ENCODE measurements at regions of chr5 and their contacts with region 1.

Region 1: GRCh38 chr5:150846654-150847333 is 473 bp downstream of the IRGM start:
- DNase-seq: peak in 2 of 10 donors; percentile 14 to 19

Region 2: DNA sequence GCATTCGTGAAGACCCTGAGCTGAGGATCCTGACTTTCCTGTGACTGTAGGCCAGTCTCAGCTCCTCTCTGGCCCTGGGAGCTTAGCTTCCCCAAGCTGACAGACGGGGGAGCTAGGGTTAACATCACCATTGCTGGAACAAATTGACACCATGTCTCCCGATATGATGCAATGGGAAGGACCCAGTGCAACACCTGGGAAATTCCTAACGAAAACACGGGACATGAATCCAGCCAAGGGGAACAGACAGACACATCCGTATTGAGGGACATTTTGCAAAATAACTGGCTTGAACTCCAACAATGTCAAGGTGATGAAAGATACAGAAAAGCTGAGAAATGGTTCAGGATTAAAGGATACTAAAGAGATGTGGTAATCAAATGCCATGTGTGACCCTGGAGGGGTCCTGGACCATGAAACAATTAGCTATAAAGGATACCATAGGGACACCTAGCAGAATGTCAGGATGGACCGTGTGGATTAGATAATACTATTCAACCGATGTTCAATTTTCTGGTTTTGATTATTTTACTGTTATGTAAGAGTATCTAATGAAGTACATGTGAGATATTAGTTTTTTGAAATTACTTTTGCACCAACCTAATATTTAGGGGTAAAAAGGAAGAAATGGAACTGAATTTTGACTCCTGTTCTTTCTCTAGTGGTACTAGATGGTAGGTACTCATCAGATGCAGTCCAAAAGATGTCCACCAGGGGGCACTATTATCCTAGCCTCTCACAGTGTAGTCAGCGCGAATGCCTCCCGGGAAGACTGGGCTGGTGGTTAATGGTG is 286.2 kb before region 1 on chr5:
- intact Hi-C with region 1: loop called (anchors 2 kb)
- DNase-seq: peak in 8 of 10 donors; percentile 59 to 94 (median 88)

Region 3: DNA sequence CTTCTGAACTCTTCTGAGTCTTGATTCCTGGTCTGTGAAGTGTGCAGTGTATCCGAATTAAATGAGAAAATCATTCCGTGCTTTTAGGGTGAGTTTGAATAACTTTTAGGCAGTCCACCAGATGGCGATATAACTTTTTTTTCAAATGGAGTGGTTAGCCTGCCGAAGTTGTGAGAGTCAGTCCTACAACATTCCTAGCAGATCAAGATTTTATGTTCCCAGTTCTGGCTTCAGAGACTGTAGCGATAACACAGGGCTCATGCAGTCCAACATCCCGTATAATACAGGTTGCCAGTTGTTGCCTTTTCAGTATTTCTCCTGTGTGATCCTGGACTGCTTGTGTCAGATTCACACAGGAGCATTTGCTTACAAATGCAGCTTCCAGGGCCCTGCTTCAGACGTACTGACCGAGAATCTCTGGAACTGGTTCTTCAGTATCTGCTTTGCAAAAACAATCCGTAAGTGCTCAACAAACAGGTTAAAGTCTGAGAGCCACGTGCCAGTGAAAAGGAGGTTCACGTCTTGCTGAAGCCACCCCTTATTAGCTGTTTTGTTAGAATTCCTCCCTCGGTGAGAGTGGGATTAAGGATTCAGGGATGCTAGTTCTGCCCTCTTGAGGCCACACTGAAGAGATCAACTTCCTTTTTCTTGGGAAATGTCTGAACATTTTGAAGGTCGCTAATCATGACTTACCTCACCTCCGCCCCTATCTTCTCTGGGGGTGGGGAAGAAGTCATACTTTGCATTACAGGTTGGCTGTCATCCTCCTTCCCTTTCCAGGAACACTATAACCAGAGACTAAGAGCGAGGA is 45.5 kb before region 1 on chr5:
- intact Hi-C with region 1: loop called (anchors 1 kb)
- DNase-seq: no peak